Naive thymus-derived CD4-positive, alpha-beta T cell (primary cell): ENCODE measurements at regions of chr4 and their contacts with region 1.

Region 1: GRCh38 chr4:99855678-99856077 is 38.5 kb downstream of the LAMTOR3 start:
- DNase-seq: no peak
- ATAC-seq: peak; percentile 78
- H3K4me3 ChIP-seq: no peak overlapping the region
- H3K4me3 Mint-ChIP-seq: peak overlapping the region in 9 of 10 donors; percentile 11 to 66 (median 45)
- H3K27ac ChIP-seq: no peak overlapping the region
- H3K27ac Mint-ChIP-seq: peak overlapping the region in 8 of 9 donors; percentile 5 to 89 (median 46)
- H3K4me1 ChIP-seq: peaks cover 8 to 9% of the 10 kb centered on the region in 2 donors
- H3K4me1 Mint-ChIP-seq: peaks cover 22 to 72% (median 34%) of the 10 kb centered on the region in 7 donors
- H3K27me3 ChIP-seq: no peaks in the 10 kb centered on the region
- H3K27me3 Mint-ChIP-seq: no peaks in the 10 kb centered on the region

Region 2: DNA sequence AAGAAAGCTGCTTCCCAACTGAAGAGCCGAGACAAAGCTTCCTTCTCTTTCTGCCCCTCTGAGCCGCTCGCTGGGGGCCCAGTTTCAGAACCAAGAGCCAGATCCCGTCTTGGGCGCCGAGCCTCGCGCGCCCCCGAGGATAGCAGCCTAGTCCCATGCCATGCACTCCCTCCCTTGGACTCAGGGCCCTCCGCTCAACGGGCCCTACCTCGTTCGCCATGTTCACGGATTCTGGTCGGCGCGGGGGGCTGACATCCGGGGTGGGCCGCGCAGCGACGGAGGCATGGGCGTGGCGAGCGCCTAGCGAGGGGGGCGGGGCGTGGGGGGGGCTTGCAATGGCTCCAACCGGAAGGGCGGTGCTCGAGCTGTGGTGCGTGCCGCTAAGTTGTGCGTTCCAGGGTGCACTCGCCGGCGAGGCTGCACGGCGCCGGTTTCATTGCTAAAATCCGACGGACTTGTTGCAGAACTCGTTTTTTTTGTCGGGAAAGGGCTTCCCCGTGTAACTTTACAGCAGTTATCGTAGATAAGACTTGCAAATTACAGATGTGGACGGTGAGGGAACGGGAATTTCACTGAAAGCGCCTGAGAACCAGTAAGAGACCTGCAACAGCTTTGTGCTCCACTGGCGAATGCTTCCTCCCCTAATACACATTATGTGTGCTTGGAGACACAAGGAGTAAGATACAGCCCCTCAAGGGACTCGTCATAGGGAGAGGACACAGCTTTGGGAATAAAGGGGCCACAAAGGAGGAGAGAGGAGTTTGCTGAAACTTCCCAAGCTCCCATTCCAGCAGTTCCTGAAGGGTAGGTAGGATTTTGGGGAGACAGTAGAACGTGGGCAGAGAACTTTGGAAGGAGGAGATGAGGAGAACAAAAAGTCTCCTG is 767.0 kb before region 1 on chr4 and contains the start of gene ADH5:
- CTCF ChIA-PET with region 1: no interaction called
- POLR2A ChIA-PET with region 1: no interaction called
- intact Hi-C with region 1: loop called in 1 of 2 experiments (anchors 5 kb)
- DNase-seq: peak; percentile 75 to 90 (median 85)
- ATAC-seq: peak; percentile 98
- H3K4me3 ChIP-seq: peak within 1 kb of the TSS; percentile 98
- H3K4me3 Mint-ChIP-seq: peak within 1 kb of the TSS; percentile 93 to 99 (median 98)
- H3K27ac ChIP-seq: peak within 1 kb of the TSS; percentile 85
- H3K27ac Mint-ChIP-seq: peak within 1 kb of the TSS; percentile 94 to 99 (median 98)
- H3K4me1 ChIP-seq: peaks cover 8 to 9% of the 10 kb centered on the region in 2 donors
- H3K4me1 Mint-ChIP-seq: peaks cover 28 to 67% (median 57%) of the 10 kb centered on the region in 7 donors
- H3K27me3 ChIP-seq: no peaks in the 10 kb centered on the region
- H3K27me3 Mint-ChIP-seq: peaks cover 0 to 11% (median 0%) of the 10 kb centered on the region in 5 donors
- total RNA-seq, gene ADH5: 42.7 to 102 (median 74.0) TPM

Region 3: DNA sequence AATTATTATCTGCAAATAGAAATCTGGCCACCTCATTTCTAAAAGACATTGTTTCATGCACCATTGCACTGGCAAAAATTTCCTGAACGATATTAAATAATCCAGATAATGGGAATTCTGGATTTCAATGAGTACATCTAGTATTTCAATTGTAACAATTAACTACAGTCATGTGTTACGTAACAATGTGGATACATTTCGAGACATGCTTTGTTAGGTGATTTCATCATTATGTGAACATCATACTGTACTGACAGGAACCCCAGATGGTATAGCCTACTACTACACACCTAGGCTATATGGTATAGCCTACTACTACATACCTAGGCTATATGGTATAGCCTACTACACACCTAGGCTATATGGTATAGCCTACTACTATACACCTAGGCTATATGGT is 23.8 kb after region 1 on chr4:
- CTCF ChIA-PET with region 1: no interaction called
- POLR2A ChIA-PET with region 1: no interaction called
- intact Hi-C with region 1: loop called (anchors 2 kb)
- DNase-seq: no peak
- ATAC-seq: no peak
- H3K4me3 ChIP-seq: no peak overlapping the region
- H3K4me3 Mint-ChIP-seq: no peak overlapping the region
- H3K27ac ChIP-seq: no peak overlapping the region
- H3K27ac Mint-ChIP-seq: no peak overlapping the region
- H3K4me1 ChIP-seq: no peaks in the 10 kb centered on the region
- H3K4me1 Mint-ChIP-seq: peaks cover 0 to 5% (median 0%) of the 10 kb centered on the region in 7 donors
- H3K27me3 ChIP-seq: no peaks in the 10 kb centered on the region
- H3K27me3 Mint-ChIP-seq: no peaks in the 10 kb centered on the region

Region 4: DNA sequence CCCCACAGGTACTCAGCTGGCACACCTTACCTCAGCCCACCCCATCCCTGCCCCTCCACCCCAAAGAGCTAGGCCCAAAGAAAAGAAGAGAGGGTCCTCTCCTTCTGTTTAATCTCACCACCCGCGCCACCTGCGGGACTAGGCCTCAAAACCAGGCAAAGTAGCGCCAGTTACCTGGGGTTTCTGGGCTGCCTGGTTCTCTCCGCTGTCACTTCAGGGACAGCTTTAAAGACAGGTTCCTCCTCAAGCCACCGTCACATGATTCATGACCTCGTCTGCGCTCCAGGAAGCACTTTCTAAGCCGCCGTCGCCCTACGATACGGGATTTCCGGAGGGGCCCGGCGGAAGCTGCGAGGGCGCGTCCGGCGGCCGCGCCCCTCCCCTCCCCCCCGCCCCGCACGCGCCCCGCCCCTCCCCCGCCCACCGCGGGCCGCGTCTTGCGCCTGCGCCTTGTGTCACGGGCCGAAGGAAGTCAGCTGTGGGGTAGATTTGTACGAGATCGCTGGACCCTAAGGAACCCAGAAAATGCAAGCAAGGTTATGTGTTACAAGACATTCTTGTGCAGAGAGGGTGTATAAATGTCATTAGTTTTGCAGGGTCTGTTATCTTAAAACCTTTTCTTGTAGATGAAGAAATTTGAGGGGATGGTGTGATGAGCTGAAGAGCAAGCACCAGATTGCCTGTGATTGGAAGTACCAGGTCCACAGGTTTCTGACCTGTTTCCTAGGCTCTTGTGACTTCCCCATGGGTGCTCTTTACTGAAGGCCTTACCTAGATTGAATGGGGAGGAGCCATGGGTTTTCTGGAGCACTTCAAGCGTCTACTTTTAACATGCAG is 38.7 kb after region 1 on chr4 and contains the start of gene LAMTOR3:
- CTCF ChIA-PET with region 1: no interaction called
- POLR2A ChIA-PET with region 1: no interaction called
- intact Hi-C with region 1: loop called in 1 of 2 experiments (anchors 2 kb)
- DNase-seq: peak; percentile 70 to 92 (median 89)
- ATAC-seq: peak; percentile 98
- H3K4me3 ChIP-seq: peak within 1 kb of the TSS; percentile 92
- H3K4me3 Mint-ChIP-seq: peak within 1 kb of the TSS; percentile 96 to 99 (median 98)
- H3K27ac ChIP-seq: peak within 1 kb of the TSS; percentile 96
- H3K27ac Mint-ChIP-seq: peak within 1 kb of the TSS; percentile 96 to 99 (median 98)
- H3K4me1 ChIP-seq: peaks cover 13 to 25% of the 10 kb centered on the region in 2 donors
- H3K4me1 Mint-ChIP-seq: peaks cover 25 to 55% (median 52%) of the 10 kb centered on the region in 7 donors
- H3K27me3 ChIP-seq: no peaks in the 10 kb centered on the region
- H3K27me3 Mint-ChIP-seq: no peaks in the 10 kb centered on the region
- total RNA-seq, gene LAMTOR3: 20.1 to 32.6 (median 27.4) TPM